ENCODE measurements at regions of chr5 and their contacts with region 1.

Region 1: DNA sequence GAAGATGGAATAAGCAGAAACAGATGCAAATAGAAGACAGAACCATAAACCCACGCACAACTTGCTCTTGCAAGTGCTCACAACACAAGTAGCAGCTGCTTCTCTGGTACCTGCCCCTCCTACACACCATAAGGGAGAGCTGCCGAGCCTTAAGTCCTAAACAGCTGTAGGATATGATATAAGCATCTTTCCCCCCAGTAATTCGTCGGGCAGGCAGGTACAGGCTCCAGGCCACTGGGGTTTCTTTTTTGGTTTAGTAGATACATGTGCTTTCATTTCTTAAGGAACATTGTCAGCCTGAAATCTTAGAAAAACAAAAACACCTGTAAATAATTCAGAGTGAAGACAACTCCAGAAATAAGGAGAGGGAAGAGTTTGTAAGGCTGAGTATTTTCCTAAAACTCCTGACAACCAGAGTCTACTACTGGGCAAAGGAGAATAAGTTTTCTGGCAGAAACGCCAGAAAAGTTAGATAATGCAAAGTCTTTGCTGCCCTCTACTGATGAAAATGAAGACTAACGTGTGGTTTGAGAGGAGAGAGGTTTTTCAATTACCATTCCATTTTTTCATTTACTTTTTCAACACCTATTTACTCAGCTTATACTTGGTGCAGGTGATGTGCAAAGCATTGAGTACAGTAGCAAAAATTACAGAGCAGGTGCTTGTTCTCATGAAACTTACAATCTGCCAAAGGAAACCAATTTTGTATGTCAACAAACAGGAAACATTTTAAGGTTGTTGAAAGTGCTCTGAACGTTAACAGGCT is 20.1 kb upstream of the TCERG1 start:
- DNase-seq: no peak
- H3K4me3 Mint-ChIP-seq: no peak overlapping the region
- H3K27ac Mint-ChIP-seq: no peak overlapping the region
- H3K4me1 Mint-ChIP-seq: no peaks in the 10 kb centered on the region
- H3K27me3 Mint-ChIP-seq: peaks cover 41% of the 10 kb centered on the region
- CTCF ChIP-seq: peak; percentile 58

Region 2: DNA sequence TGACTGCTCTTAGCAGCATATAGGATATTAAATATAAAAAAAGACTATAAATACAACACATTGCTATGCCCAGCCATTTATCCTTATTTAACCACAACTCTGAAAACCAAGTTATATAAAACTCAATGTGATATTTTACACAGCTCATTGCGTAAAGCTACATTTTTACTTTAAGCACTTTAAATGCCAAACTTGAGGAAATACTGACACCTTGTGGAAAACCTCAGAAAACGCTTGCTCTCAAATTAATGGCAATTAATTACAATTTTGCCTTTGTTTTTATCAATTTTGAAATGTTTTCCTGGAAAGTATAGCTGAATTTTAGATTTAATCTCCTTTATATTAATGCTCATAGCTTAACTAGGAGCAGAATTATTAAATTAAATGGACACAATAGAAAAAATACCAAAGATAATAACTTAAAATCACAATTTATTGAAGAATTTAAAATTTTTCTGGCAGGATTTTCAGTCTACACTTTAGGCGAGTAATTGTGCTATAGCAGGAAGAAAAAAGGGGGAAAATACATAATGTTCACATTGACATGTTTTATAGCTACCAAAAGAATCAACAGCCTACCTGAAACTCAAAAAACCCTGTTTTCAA is 296.5 kb before region 1 on chr5:
- CTCF ChIA-PET with region 1: no interaction called
- intact Hi-C with region 1: loop called (anchors 5 kb)
- DNase-seq: no peak
- H3K4me3 Mint-ChIP-seq: no peak overlapping the region
- H3K27ac Mint-ChIP-seq: no peak overlapping the region
- H3K4me1 Mint-ChIP-seq: no peaks in the 10 kb centered on the region
- H3K27me3 Mint-ChIP-seq: no peaks in the 10 kb centered on the region
- CTCF ChIP-seq: peak; percentile 54

Region 3: DNA sequence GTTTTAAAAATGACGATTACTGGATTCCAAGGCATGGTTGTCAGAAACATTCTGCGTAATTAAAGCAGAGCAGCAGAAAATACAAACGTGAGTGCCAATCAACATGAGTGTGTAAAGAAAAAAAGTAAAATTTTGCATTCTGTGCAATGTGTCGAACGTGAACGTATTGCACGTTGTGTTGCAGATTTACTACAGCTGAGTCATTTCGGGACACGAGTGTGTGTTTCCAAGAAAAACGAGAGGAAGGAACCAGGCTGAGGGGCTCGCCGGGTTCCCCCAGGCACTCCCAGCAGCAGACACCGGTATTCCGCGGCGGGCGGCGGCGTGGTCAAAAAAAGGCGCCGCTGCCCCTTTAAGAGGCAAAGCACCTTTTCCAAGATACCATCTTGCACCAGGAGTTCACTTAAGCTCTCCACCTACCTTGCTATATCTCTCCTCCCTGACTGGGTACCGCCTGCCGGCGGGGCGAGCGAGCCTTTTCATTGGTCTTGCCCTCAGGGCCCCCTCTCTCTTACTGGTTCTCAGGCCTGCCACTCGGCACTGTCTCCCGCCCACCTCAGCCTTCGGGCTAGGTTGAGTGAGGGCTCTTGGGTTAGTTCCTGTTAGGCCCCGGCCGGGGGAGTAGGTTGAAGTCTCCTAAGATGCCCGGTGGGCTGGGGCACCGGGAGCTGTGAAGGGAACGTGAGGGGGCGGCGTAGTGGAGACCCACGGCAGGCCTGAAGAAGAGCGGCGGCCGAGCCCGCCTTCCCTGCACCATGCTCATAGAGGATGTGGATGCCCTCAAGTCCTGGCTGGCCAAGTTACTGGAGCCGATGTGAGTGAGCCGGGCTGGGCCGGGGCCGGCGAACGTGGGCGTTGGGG is 223.8 kb before region 1 on chr5 and contains the start of gene RBM27:
- CTCF ChIA-PET with region 1: no interaction called
- intact Hi-C with region 1: loop called (anchors 10 kb)
- DNase-seq: peak; percentile 99
- H3K4me3 Mint-ChIP-seq: no peak within 1 kb of the TSS
- H3K27ac Mint-ChIP-seq: no peak within 1 kb of the TSS
- H3K4me1 Mint-ChIP-seq: no peaks in the 10 kb centered on the region
- H3K27me3 Mint-ChIP-seq: no peaks in the 10 kb centered on the region
- CTCF ChIP-seq: no peak
- total RNA-seq, gene RBM27: 24.1 and 26.3 TPM in 2 replicates

Region 4: GRCh38 chr5:146291421-146292074 is 135.5 kb before region 1 on chr5:
- CTCF ChIA-PET with region 1: interaction called, 3 read pairs
- intact Hi-C with region 1: loop called (anchors 1 kb)
- DNase-seq: peak; percentile 51
- H3K4me3 Mint-ChIP-seq: no peak overlapping the region
- H3K27ac Mint-ChIP-seq: no peak overlapping the region
- H3K4me1 Mint-ChIP-seq: no peaks in the 10 kb centered on the region
- H3K27me3 Mint-ChIP-seq: no peaks in the 10 kb centered on the region
- CTCF ChIP-seq: peak; percentile 75

Region 5: DNA sequence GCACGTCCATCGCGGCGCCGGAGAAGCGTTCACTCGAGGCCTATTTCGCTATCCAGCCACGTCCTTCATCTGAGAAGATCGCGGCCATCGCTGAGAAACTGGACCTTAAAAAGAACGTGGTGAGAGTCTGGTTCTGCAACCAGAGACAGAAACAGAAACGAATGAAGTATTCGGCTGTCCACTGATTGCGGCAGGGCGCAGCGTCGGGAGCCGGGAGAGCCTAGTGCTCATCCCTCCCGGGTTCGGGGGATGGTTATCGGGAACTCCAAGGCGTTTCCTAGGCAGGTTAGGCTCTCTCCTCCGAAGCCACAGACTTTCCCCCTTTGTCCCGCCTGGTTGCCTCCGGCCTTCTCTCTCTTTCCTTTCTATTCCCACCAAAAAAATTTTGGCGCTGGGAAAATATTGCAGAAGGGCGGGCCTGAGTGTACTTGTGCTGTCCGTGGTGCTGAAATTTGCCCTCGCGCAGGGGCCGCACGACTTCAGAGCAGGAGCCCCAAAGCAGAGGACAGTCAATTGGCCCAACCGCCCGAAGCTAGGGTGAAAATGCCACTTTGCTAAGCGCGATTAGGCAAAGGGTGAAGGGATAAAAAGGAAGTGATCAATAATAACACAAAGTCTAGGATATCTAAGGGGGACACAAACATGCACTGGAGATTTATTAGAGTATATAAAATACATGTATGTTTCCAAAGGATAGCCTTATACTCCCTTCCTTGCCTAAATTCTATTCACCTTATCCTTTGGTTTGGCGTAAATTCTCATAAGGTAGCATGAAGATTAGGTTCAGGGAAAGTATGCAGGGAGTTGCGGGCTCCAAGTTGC is 86.6 kb before region 1 on chr5:
- CTCF ChIA-PET with region 1: no interaction called
- intact Hi-C with region 1: no loop called
- DNase-seq: no peak
- H3K4me3 Mint-ChIP-seq: no peak overlapping the region
- H3K27ac Mint-ChIP-seq: no peak overlapping the region
- H3K4me1 Mint-ChIP-seq: peaks cover 13% of the 10 kb centered on the region
- H3K27me3 Mint-ChIP-seq: peaks cover 100% of the 10 kb centered on the region
- CTCF ChIP-seq: no peak

Region 6: GRCh38 chr5:146440870-146441495 is 13.9 kb after region 1 on chr5:
- CTCF ChIA-PET with region 1: no interaction called
- intact Hi-C with region 1: no loop called
- DNase-seq: no peak
- H3K4me3 Mint-ChIP-seq: no peak overlapping the region
- H3K27ac Mint-ChIP-seq: no peak overlapping the region
- H3K4me1 Mint-ChIP-seq: no peaks in the 10 kb centered on the region
- H3K27me3 Mint-ChIP-seq: peaks cover 14% of the 10 kb centered on the region
- CTCF ChIP-seq: no peak

Measured in Calu3 (cell line).